Breast epithelium (tissue), 4 donors: ENCODE measurements at regions of chr5 and their contacts with region 1.

Region 1: GRCh38 chr5:3925022-3925421 is 329.4 kb downstream of the IRX1 start:
- DNase-seq: no peak
- H3K4me3 ChIP-seq: no peak overlapping the region
- H3K27ac ChIP-seq: no peak overlapping the region
- H3K4me1 ChIP-seq: no peaks in the 10 kb centered on the region
- H3K27me3 ChIP-seq: no peaks in the 10 kb centered on the region
- CTCF ChIP-seq: no peak
- POLR2A ChIP-seq: no peak

Region 2: GRCh38 chr5:3092664-3093063 is 832.4 kb before region 1 on chr5:
- intact Hi-C with region 1: no loop called
- DNase-seq: no peak
- H3K4me3 ChIP-seq: no peak overlapping the region
- H3K27ac ChIP-seq: no peak overlapping the region
- H3K4me1 ChIP-seq: no peaks in the 10 kb centered on the region
- H3K27me3 ChIP-seq: no peaks in the 10 kb centered on the region
- CTCF ChIP-seq: no peak
- POLR2A ChIP-seq: no peak

Region 3: GRCh38 chr5:3854188-3854821 is 70.7 kb before region 1 on chr5:
- intact Hi-C with region 1: no loop called
- DNase-seq: no peak
- H3K4me3 ChIP-seq: no peak overlapping the region
- H3K27ac ChIP-seq: no peak overlapping the region
- H3K4me1 ChIP-seq: no peaks in the 10 kb centered on the region
- H3K27me3 ChIP-seq: no peaks in the 10 kb centered on the region
- CTCF ChIP-seq: no peak
- POLR2A ChIP-seq: no peak

Region 4: GRCh38 chr5:3891113-3891512 is 33.9 kb before region 1 on chr5:
- intact Hi-C with region 1: no loop called
- DNase-seq: no peak
- H3K4me3 ChIP-seq: no peak overlapping the region
- H3K27ac ChIP-seq: no peak overlapping the region
- H3K4me1 ChIP-seq: no peaks in the 10 kb centered on the region
- H3K27me3 ChIP-seq: no peaks in the 10 kb centered on the region
- CTCF ChIP-seq: no peak
- POLR2A ChIP-seq: no peak

Region 5: DNA sequence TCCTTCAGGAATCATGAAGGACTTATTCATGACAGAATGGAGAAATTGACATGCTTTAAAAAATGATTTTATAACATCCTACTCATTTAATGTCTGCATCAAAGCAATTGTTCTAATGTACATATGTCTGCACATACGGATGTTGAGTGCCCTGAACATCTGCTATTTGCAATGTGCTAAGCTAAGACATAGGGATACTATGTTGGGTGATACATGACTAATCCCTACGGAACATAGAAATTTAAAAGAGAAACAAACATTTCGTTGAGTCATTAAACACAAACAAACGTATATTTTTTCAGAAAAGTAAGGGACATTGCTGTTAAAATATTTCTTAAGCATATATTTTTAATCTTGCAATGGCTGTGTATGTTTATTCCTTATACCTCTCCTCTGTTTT is 528.6 kb after region 1 on chr5:
- intact Hi-C with region 1: loop called (anchors 5 kb)
- DNase-seq: no peak
- H3K4me3 ChIP-seq: no peak overlapping the region
- H3K27ac ChIP-seq: no peak overlapping the region
- H3K4me1 ChIP-seq: no peaks in the 10 kb centered on the region
- H3K27me3 ChIP-seq: no peaks in the 10 kb centered on the region
- CTCF ChIP-seq: no peak
- POLR2A ChIP-seq: no peak